ENCODE measurements at regions of chr13 and their contacts with region 1.

Region 1: GRCh38 chr13:95181586-95181985 is 119.7 kb downstream of the ABCC4 start:
- DNase-seq: no peak
- ATAC-seq: no peak
- H3K4me3 ChIP-seq: no peak overlapping the region
- H3K27ac ChIP-seq: peak overlapping the region in 1 of 10 donors; percentile 31
- H3K4me1 ChIP-seq: peaks cover 0 to 19% (median 11%) of the 10 kb centered on the region in 9 donors
- H3K27me3 ChIP-seq: no peaks in the 10 kb centered on the region
- CTCF ChIP-seq: no peak

Region 2: DNA sequence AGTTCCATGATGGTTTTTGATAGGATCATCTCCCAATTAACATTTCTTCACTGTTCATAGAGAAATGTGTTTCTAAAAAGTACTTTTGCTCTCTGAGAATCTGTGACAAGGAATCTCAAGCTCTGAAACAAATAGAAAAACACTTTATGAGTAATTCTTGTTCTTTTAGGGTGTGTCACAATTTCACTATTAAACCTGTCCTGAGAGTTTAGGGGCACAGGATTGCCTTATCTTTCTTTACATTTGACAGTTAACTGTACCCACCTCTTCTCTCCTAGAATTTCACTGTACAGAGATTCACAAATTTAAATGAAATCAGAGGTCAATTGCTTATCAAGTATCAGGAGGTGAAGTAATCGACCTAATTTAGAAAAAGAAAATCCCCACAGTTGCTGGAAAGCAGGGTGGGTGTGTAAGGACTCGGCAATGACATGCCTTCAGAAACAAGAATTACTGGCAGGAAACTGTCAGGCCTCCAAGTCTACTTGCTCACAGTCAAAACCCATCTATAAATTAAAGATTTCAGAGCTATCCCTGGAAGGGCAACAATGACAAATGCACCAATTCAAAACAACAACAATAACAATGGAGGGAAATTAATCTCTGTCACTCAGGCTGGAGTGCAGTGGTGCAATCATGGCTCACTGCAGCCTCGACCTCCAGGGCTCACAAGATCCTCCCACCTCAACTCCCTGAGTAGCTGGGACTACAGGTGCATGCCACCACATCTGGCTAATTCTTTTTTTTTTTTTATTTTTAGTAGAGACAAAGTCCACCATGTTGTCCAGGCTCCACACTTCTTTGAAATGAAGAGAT is 130.6 kb before region 1 on chr13:
- intact Hi-C with region 1: no loop called
- DNase-seq: no peak
- ATAC-seq: no peak
- H3K4me3 ChIP-seq: no peak overlapping the region
- H3K27ac ChIP-seq: no peak overlapping the region
- H3K4me1 ChIP-seq: no peaks in the 10 kb centered on the region
- H3K27me3 ChIP-seq: no peaks in the 10 kb centered on the region
- CTCF ChIP-seq: no peak

Region 3: DNA sequence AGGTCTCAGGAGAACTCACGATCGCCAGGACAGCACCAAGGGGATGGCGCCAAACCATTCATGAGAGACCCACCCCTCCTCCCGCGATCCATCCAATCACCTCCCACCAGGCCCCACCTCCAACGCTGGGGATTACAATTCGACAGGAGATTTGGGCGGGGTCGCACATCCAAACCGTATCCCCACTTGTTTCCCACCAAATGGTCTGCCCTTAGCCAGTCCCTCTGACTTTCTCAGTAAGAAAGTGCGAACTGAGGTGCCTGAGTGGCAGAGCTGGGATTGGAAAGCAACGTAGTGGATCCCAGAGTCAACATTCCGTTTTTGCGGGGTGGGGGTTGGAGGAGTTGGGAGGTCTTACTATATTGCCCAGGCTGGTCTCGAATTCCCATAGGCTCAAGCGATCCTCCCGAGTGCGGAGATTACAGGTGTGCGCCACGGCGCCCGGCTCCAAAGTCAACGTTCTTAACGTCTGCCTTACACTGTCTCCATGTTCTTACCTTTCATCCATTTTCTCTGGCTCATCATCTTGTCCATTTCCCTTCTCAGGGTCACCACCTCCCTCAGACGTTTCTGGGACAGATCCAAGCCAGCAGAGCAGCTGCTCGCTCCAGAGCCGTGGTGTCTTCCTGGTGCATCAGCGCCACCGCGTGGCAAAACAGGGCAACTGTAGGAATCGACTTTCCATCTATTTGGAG is 222.4 kb after region 1 on chr13:
- intact Hi-C with region 1: loop called in 1 of 10 experiments (anchors 2 kb)
- DNase-seq: peak; percentile 82 to 83
- ATAC-seq: peak; percentile 88 to 96 (median 92)
- H3K4me3 ChIP-seq: peak overlapping the region in 9 of 10 donors; percentile 17 to 55 (median 45)
- H3K27ac ChIP-seq: no peak overlapping the region
- H3K4me1 ChIP-seq: peaks cover 0 to 9% (median 7%) of the 10 kb centered on the region in 9 donors
- H3K27me3 ChIP-seq: peaks cover 0 to 6% (median 0%) of the 10 kb centered on the region in 7 donors
- CTCF ChIP-seq: peak; percentile 90 to 97 (median 95)

Measured in heart right ventricle (tissue), 16 donors.